ENCODE measurements at regions of chr3 and their contacts with region 1.

Region 1: DNA sequence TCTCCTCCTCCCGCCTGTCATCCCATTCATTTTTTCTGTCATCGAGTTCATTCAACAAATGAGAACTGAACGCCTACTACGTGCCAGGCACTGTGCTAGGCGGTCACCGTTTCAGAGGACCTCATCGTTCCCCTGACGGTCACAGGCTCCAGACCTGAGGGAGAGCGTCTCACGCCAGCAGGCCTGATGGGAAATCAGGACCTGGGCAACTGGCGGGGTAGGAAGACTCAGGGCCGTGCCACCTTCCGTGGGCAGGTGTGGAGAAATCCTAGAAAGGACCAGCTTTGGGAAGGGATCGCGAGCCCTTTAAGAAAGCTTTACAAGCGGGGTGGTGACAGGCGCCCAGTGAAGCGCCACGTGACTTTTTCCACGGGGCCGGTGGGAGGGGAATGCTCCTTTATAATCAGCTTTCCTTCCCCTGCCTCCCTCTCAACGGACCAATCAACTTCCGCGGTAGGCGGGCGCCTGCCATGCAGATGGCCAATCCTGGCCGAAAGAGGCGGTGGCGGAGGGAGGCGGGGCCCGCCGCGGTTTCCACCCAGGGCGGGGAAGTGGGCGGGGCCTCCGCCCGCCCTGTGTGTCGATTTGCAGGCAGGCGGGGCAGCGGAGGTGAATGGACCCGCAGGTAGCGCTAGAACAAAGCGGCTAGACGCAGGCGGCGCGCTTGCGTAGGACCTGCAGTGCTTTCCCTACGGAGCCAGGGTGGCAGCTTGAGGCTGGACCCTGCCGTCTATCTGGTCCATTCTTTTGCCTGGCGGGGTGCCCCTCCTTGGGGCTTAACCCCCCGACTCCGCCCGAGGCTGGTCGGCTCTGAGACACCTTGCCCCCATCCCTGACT is 816 bp upstream of the DUSP7 start:
- DNase-seq: peak; percentile 99
- H3K4me3 Mint-ChIP-seq: peak overlapping the region; percentile 91
- H3K27ac Mint-ChIP-seq: peak overlapping the region; percentile 94
- H3K4me1 Mint-ChIP-seq: peaks cover 31% of the 10 kb centered on the region
- H3K27me3 Mint-ChIP-seq: peaks cover 2% of the 10 kb centered on the region

Region 2: GRCh38 chr3:51384726-51385473 is 672.3 kb before region 1 on chr3 and contains the start of gene MANF:
- intact Hi-C with region 1: loop called (anchors 10 kb)
- DNase-seq: peak; percentile 98
- H3K4me3 Mint-ChIP-seq: peak within 1 kb of the TSS; percentile 99
- H3K27ac Mint-ChIP-seq: peak within 1 kb of the TSS; percentile 98
- H3K4me1 Mint-ChIP-seq: peaks cover 54% of the 10 kb centered on the region
- H3K27me3 Mint-ChIP-seq: no peaks in the 10 kb centered on the region
- total RNA-seq, gene MANF: 200 and 208 TPM in 2 replicates

Region 3: GRCh38 chr3:51941798-51942602 is 115.2 kb before region 1 on chr3 and contains the starts of genes PARP3 and RRP9:
- intact Hi-C with region 1: loop called (anchors 1 kb)
- DNase-seq: peak; percentile 100
- H3K4me3 Mint-ChIP-seq: peak within 1 kb of the TSS; percentile 89
- H3K27ac Mint-ChIP-seq: peak within 1 kb of the TSS; percentile 84
- H3K4me1 Mint-ChIP-seq: peaks cover 42% of the 10 kb centered on the region
- H3K27me3 Mint-ChIP-seq: no peaks in the 10 kb centered on the region
- total RNA-seq, gene PARP3: 13.4 and 14.5 TPM in 2 replicates
- total RNA-seq, gene RRP9: 91.8 and 93.1 TPM in 2 replicates

Region 4: GRCh38 chr3:51995346-51996163 is 61.6 kb before region 1 on chr3 and contains the start of gene RPL29:
- intact Hi-C with region 1: loop called (anchors 1 kb)
- DNase-seq: peak; percentile 88
- H3K4me3 Mint-ChIP-seq: peak within 1 kb of the TSS; percentile 98
- H3K27ac Mint-ChIP-seq: peak within 1 kb of the TSS; percentile 100
- H3K4me1 Mint-ChIP-seq: peaks cover 24% of the 10 kb centered on the region
- H3K27me3 Mint-ChIP-seq: peaks cover 5% of the 10 kb centered on the region
- total RNA-seq, gene RPL29: 1,590 and 1,596 TPM in 2 replicates

Region 5: DNA sequence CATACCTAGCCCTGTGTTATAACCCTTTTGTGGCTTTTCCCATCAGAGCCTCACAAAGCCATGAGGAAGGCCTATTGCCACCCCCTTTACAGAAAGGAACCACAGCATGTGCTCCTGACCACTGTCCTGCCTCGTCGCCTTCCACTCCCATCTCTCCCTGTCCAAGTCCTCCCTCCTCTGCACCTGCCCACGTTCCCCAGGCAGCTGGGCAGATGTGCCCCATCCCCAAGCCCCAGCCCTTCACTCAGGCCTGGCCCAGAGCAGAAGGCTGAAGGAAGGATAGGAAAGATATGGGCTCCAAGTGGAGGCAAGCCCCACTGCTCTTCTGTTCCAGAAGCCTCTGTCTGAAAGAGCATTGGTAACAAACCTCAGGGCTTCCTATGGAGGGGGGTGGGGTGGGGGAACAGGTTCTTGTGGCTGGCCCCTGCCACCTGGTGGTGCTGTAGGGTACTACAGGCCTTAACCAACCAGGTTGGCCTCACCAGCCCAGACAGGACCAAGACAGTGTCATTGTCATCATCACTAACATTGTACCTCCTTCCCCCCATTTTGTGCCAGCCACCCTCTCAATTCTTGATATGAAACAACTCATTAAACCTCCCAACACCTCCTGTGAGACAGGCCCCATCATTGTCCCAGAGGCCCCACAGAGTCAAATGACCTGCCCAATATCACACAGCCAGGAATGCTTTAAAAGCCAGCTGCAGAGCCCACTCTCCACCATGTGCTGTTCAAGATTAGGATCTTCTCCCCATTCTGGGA is 87.0 kb after region 1 on chr3:
- intact Hi-C with region 1: loop called (anchors 1 kb)
- DNase-seq: peak; percentile 71
- H3K4me3 Mint-ChIP-seq: no peak overlapping the region
- H3K27ac Mint-ChIP-seq: peak overlapping the region; percentile 18
- H3K4me1 Mint-ChIP-seq: peaks cover 14% of the 10 kb centered on the region
- H3K27me3 Mint-ChIP-seq: no peaks in the 10 kb centered on the region

Region 6: DNA sequence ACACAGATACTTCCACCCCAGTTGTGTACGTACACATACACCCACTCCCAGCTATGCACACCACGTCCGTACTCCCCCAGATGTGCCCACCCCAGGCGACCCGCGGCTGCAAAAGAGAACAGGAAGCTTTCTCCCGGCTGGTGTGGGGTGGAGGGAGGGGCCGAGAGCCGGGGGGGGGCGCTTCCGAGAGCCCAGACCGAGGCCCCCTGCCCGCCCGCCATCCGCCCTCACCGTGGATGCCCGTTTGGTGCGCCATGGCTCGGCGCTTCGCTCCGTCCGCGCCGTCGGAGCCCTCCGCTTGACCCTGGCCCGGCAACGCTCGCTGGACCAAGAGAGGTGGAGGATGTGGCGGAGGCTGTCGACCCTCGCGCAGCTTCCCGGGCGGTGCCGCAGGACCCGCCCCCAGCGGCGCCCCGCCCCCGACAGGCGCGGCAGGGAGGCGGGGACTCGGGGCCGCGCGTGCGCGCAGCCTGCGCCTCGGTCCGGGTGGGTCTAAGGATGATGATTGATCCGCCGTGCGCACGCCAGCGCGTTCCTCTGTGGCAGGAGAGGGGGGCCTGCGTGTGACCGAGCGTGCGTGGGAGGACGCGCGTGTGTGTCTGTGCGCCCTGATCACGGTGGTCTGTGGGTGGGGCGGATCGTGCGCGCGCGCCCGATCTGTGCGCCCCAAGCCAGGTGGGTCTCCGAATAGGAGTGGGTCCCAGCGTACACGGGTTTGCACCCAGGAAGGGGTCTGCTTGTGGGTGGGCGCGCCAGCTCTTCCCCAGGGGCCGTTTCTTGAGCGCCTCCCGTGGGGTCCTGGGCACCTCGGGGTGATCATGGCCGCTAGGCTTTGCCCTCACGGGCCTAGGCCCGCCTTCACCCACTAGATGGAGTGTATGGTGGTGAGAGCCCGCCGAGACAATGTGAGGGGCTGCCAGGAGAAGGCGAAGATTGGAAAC is 181.8 kb after region 1 on chr3 and contains the start of gene TWF2:
- intact Hi-C with region 1: loop called (anchors 1 kb)
- DNase-seq: peak; percentile 87
- H3K4me3 Mint-ChIP-seq: peak within 1 kb of the TSS; percentile 95
- H3K27ac Mint-ChIP-seq: peak within 1 kb of the TSS; percentile 98
- H3K4me1 Mint-ChIP-seq: peaks cover 75% of the 10 kb centered on the region
- H3K27me3 Mint-ChIP-seq: no peaks in the 10 kb centered on the region
- total RNA-seq, gene TWF2: 94.3 and 98.6 TPM in 2 replicates

Region 7: GRCh38 chr3:52685709-52686691 is 628.8 kb after region 1 on chr3 and contains the starts of genes GNL3 and PBRM1:
- intact Hi-C with region 1: loop called (anchors 10 kb)
- DNase-seq: peak; percentile 93
- H3K4me3 Mint-ChIP-seq: peak within 1 kb of the TSS; percentile 98
- H3K27ac Mint-ChIP-seq: peak within 1 kb of the TSS; percentile 99
- H3K4me1 Mint-ChIP-seq: peaks cover 75% of the 10 kb centered on the region
- H3K27me3 Mint-ChIP-seq: no peaks in the 10 kb centered on the region
- total RNA-seq, gene GNL3: 241 and 245 TPM in 2 replicates
- total RNA-seq, gene PBRM1: 68.6 and 68.8 TPM in 2 replicates

Measured in activated T-helper 1 cell treated with anti-CD3 and anti-CD28 coated beads, Interleukin-12 subunit alpha, Interleukin-12 subunit beta, Interleukin-2, Interleukin-4 antibody, amounts not matched to agents 30 ng/mL and 10 ng/mL and 1 ng/mL, durations not matched to agents 14 hours and 24 hours and 36 hours (primary cell).